HEK293 (cell line): ENCODE measurements at regions of chr7 and their contacts with region 1.

Region 1: GRCh38 chr7:143882611-143883078 is 19.3 kb downstream of the TCAF1 start:
- H3K4me3 ChIP-seq: peak overlapping the region; percentile 63
- H3K27ac ChIP-seq: no peak overlapping the region; the same call in 1 of the 2 replicates
- H3K4me1 ChIP-seq: no peaks in the 10 kb centered on the region
- CTCF ChIP-seq: no peak

Region 2: DNA sequence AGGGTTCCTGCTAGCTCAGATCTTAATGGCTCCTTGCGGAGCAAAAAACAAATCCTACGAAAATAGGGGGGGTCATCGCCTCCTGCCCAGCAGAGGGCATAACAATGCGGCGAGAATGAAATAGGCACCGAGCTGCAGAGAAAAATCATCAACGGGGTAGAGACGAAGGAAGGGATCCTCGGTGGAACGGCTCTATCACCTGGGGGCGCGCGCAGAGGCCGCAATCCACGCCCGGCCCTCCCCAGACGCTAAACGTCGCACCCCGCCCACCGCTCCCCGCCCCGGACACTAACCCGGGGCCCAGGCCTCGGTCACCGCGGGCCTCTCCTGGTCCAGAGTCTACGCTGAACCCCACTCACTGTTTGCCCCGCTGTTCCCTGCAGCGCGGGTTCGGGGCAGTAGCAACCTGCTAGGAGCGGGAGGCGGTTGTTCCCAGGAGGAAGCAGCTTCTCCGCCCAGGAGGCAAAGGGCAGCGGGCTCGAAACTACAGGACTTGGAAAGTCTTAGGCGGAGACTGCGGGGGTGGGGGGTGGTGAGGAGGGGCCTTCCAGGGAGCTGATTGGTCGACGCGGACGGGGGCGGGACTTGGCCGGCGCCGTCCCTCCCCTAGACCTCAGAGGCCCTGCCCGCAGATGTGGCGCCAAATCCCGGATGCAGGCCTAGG is 19.2 kb after region 1 on chr7 and contains the start of gene TCAF1:
- CTCF ChIA-PET with region 1: interaction called, 4 read pairs
- POLR2A ChIA-PET with region 1: interaction called, 21 read pairs
- H3K4me3 ChIP-seq: peak within 1 kb of the TSS; percentile 88
- H3K27ac ChIP-seq: peak within 1 kb of the TSS; percentile 80
- H3K4me1 ChIP-seq: peaks cover 6% of the 10 kb centered on the region; the same call in 1 of the 2 replicates
- CTCF ChIP-seq: peak; percentile 97

Region 3: DNA sequence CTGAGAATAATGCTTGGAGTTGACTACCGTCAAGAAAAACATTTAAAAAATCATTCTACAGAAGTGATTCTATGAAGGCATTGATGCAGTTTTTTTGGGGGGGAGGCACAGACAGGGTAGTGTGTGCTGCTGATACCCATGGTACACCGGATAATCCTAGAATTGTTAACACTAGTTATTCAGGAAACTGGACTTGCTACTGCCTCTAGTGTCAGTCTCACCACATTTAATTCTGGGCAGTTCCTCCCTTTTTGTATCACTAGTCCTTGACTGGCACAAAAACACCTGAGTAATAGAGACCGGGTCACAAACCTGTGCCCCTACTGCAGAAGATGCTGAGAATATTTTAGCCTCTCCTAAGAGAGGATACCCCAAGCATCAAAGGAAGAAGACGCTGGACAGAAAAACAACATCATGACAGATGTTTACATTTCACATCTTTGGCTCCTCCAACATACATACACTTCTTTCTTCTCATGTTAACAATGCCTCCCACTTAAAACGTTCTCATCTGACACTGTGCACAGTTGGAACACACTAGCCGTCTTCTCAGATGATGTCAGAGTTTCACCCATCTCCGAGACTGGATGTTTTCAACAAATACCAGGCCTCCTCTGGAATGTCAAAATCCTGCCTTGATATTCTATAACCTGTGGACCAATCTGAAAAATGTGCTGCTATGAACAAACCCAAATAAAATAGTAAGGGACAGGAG is 32.5 kb after region 1 on chr7:
- CTCF ChIA-PET with region 1: no interaction called
- POLR2A ChIA-PET with region 1: no interaction called
- H3K4me3 ChIP-seq: no peak overlapping the region
- H3K27ac ChIP-seq: no peak overlapping the region
- H3K4me1 ChIP-seq: no peaks in the 10 kb centered on the region
- CTCF ChIP-seq: no peak